HEK293 (cell line): ENCODE measurements at regions of chr22 and their contacts with region 1.

Region 1: GRCh38 chr22:31661851-31662656 is at the start of gene PISD:
- H3K4me3 ChIP-seq: peak within 1 kb of the TSS; percentile 94
- H3K27ac ChIP-seq: peak within 1 kb of the TSS; percentile 33; the same call in 1 of the 2 replicates
- H3K4me1 ChIP-seq: no peaks in the 10 kb centered on the region
- CTCF ChIP-seq: no peak

Region 2: GRCh38 chr22:31646186-31647089 is 15.6 kb before region 1 on chr22:
- CTCF ChIA-PET with region 1: interaction called, 4 read pairs
- POLR2A ChIA-PET with region 1: interaction called, 13 read pairs
- H3K4me3 ChIP-seq: no peak overlapping the region
- H3K27ac ChIP-seq: peak overlapping the region; percentile 39
- H3K4me1 ChIP-seq: peaks cover 8% of the 10 kb centered on the region
- CTCF ChIP-seq: no peak

Region 3: GRCh38 chr22:31692186-31692886 is 30.3 kb after region 1 on chr22:
- CTCF ChIA-PET with region 1: interaction called, 11 read pairs
- POLR2A ChIA-PET with region 1: no interaction called
- H3K4me3 ChIP-seq: no peak overlapping the region
- H3K27ac ChIP-seq: no peak overlapping the region
- H3K4me1 ChIP-seq: no peaks in the 10 kb centered on the region
- CTCF ChIP-seq: no peak

Region 4: DNA sequence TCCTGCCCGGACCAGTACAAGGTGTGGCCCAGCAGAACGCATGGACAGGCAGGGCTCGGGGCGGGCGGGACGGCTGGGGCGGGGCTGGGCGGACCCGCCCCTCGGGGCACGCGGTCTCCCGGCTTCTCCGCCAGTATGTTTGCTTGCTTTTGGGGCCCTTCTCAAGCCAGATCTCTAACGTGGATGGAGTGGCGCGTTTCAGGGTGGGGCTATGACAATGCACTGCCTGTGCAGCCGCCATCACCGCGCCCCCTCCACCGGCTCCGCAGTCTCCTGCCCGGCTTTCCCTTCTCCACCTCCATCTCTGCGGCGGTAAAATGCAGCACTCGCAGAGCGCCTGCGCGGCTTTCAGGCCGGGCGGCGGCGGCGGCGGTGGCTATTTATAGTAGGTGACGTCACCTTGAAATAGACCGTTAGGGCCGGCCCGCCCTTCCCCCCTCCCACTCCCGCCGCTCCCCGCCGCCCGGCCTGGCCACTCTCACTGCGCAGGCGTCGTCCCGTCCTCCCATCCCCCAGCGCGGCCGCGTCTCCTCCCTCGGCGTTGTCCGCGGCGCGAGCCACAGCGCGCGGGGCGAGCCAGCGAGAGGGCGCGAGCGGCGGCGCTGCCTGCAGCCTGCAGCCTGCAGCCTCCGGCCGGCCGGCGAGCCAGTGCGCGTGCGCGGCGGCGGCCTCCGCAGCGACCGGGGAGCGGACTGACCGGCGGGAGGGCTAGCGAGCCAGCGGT is 282.1 kb after region 1 on chr22 and contains the start of gene YWHAH:
- CTCF ChIA-PET with region 1: interaction called, 5 read pairs
- POLR2A ChIA-PET with region 1: interaction called, 10 read pairs
- H3K4me3 ChIP-seq: peak within 1 kb of the TSS; percentile 83
- H3K27ac ChIP-seq: peak within 1 kb of the TSS; percentile 99
- H3K4me1 ChIP-seq: peaks cover 12% of the 10 kb centered on the region; the same call in 1 of the 2 replicates
- CTCF ChIP-seq: no peak

Region 5: GRCh38 chr22:32080904-32081303 is 418.9 kb after region 1 on chr22:
- CTCF ChIA-PET with region 1: interaction called, 14 read pairs
- POLR2A ChIA-PET with region 1: no interaction called
- H3K4me3 ChIP-seq: no peak overlapping the region
- H3K27ac ChIP-seq: no peak overlapping the region
- H3K4me1 ChIP-seq: peaks cover 12% of the 10 kb centered on the region
- CTCF ChIP-seq: peak; percentile 25